ENCODE measurements at regions of chr17 and their contacts with region 1.

Region 1: GRCh38 chr17:31130286-31131224 is 35.8 kb downstream of the NF1 start:
- DNase-seq: no peak
- ATAC-seq: peak; percentile 40; the same call in 1 of the 2 replicates
- H3K4me3 ChIP-seq: no peak overlapping the region
- H3K27ac ChIP-seq: no peak overlapping the region
- H3K4me1 ChIP-seq: peaks cover 4% of the 10 kb centered on the region; the same call in 1 of the 2 replicates
- H3K27me3 ChIP-seq: no peaks in the 10 kb centered on the region
- CTCF ChIP-seq: no peak
- POLR2A ChIP-seq: no peak
- RAD21 ChIP-seq: no peak

Region 2: GRCh38 chr17:31008374-31009041 is 122.0 kb before region 1 on chr17:
- CTCF ChIA-PET with region 1: no interaction called
- POLR2A ChIA-PET with region 1: no interaction called
- dilution Hi-C with region 1: no loop called
- in situ Hi-C with region 1: no loop called
- intact Hi-C with region 1: no loop called
- DNase-seq: peak; percentile 45
- ATAC-seq: peak; percentile 75
- H3K4me3 ChIP-seq: peak overlapping the region; percentile 47
- H3K27ac ChIP-seq: 0 out of 2 replicates have a peak overlapping the region, but pooled peaks have one; percentile 0
- H3K4me1 ChIP-seq: no peaks in the 10 kb centered on the region; the same call in 1 of the 2 replicates
- H3K27me3 ChIP-seq: no peaks in the 10 kb centered on the region
- CTCF ChIP-seq: no peak
- POLR2A ChIP-seq: no peak
- RAD21 ChIP-seq: no peak

Region 3: GRCh38 chr17:31167111-31167510 is 36.6 kb after region 1 on chr17:
- CTCF ChIA-PET with region 1: no interaction called
- POLR2A ChIA-PET with region 1: no interaction called
- dilution Hi-C with region 1: no loop called
- in situ Hi-C with region 1: no loop called
- intact Hi-C with region 1: loop called (anchors 5 kb)
- DNase-seq: no peak
- ATAC-seq: no peak
- H3K4me3 ChIP-seq: no peak overlapping the region
- H3K27ac ChIP-seq: no peak overlapping the region
- H3K4me1 ChIP-seq: 0 out of 2 replicates have a peak, but pooled peaks cover 5% of the 10 kb centered on the region
- H3K27me3 ChIP-seq: no peaks in the 10 kb centered on the region
- CTCF ChIP-seq: no peak
- POLR2A ChIP-seq: no peak
- RAD21 ChIP-seq: no peak